B cell (primary cell): ENCODE measurements at regions of chr10 and their contacts with region 1.

Region 1: DNA sequence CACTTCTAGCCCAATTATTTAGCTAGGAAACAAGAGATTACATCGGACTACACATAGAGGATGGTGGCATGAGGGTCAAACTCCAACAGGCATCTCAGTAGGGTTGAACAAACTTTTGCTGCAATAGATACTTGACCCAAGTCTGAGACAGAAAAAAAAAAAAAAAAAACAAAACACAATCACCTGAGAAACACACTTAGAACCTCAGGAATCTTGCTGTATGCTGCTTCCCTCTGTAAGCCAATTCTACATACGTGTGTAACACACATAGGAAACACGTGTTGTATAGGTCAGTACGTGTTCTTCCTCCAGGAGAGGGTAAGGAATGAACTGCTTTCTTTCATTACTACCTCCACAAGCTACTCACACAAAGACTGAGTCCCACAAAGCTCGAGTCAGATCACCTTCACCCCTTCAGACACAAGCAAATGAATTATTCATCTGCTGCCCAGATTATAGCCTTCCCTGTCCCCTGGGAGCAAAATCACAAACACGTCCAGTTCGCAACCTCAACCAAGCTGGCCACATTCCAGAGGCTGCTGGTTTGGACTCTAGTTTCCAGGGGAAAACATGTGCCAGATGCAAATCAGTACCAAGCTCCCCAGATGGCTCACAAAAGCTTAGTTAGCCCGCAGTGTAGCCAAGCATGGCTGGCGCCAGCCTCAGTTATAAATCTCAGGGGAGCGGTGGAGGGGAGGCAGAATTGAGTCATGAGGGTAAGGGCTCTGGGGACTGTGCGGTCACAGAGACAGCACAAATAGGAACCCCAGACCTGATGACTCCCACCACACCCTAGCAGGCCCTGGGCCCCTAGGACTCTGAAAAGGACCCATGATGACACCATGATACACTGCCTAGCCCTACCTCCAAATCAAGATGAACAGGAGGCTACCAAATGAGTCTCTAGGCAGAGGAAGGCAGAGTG is 15.1 kb downstream of the PSAP start:
- DNase-seq: peak; percentile 95
- ATAC-seq: peak; percentile 92
- H3K4me3 ChIP-seq: peak overlapping the region; percentile 7 to 49 (median 30)
- H3K4me3 Mint-ChIP-seq: peak overlapping the region; percentile 88
- H3K27ac ChIP-seq: peak overlapping the region; percentile 91 to 94
- H3K27ac Mint-ChIP-seq: peak overlapping the region; percentile 97
- H3K4me1 ChIP-seq: peaks cover 74 to 91% of the 10 kb centered on the region in 2 donors
- H3K4me1 Mint-ChIP-seq: peaks cover 79% of the 10 kb centered on the region
- H3K27me3 ChIP-seq: no peaks in the 10 kb centered on the region
- H3K27me3 Mint-ChIP-seq: no peaks in the 10 kb centered on the region
- CTCF ChIP-seq: no peak

Region 2: GRCh38 chr10:71771821-71772617 is 63.9 kb before region 1 on chr10:
- CTCF ChIA-PET with region 1: interaction called, 5 read pairs
- POLR2A ChIA-PET with region 1: interaction called, 8 read pairs
- intact Hi-C with region 1: loop called (anchors 1 kb)
- DNase-seq: peak; percentile 27
- ATAC-seq: no peak
- H3K4me3 ChIP-seq: peak overlapping the region; percentile 82 to 97 (median 90)
- H3K4me3 Mint-ChIP-seq: peak overlapping the region; percentile 94
- H3K27ac ChIP-seq: peak overlapping the region; percentile 88 to 95
- H3K27ac Mint-ChIP-seq: peak overlapping the region; percentile 92
- H3K4me1 ChIP-seq: peaks cover 90 to 98% of the 10 kb centered on the region in 2 donors
- H3K4me1 Mint-ChIP-seq: peaks cover 93% of the 10 kb centered on the region
- H3K27me3 ChIP-seq: no peaks in the 10 kb centered on the region
- H3K27me3 Mint-ChIP-seq: no peaks in the 10 kb centered on the region
- CTCF ChIP-seq: no peak

Region 3: GRCh38 chr10:71790749-71791552 is 45.0 kb before region 1 on chr10:
- CTCF ChIA-PET with region 1: no interaction called
- POLR2A ChIA-PET with region 1: no interaction called
- intact Hi-C with region 1: no loop called
- DNase-seq: no peak
- ATAC-seq: peak; percentile 74
- H3K4me3 ChIP-seq: no peak overlapping the region
- H3K4me3 Mint-ChIP-seq: peak overlapping the region; percentile 67
- H3K27ac ChIP-seq: no peak overlapping the region
- H3K27ac Mint-ChIP-seq: peak overlapping the region; percentile 41
- H3K4me1 ChIP-seq: peaks cover 16 to 19% of the 10 kb centered on the region in 2 donors
- H3K4me1 Mint-ChIP-seq: peaks cover 16% of the 10 kb centered on the region
- H3K27me3 ChIP-seq: peaks cover 0 to 5% (median 2%) of the 10 kb centered on the region in 4 experiments
- H3K27me3 Mint-ChIP-seq: peaks cover 6% of the 10 kb centered on the region
- CTCF ChIP-seq: no peak

Region 4: DNA sequence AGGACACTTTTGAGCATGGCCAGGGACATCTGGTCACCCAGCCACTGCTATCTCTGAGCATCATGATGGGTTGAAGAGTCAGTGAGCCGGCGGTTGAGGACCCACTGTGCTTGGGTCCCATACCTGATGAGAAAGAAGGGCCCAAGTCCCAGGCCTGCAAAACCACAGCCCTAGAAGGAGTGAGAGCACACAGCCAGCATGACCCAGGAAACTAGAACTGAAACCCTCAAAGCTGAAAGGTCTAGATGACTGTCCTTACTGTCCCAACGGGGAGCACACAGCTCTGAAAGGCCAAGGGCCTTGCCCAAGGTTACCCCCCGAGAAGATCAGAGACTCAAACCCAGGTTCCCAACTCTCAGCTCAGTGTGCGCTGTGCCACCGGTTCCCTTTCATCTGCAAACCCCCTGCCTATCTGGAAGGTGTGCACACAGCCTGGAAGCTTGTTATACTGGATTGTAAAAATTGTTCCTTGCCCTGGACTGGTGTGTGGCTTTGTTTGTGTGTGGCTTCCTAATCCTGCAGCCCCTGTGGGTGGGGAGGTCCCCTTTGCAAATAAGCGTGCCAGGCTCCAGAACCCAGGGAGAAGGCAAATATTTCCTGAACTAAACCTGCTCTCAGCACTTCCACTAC is 37.8 kb after region 1 on chr10:
- CTCF ChIA-PET with region 1: interaction called, 7 read pairs
- POLR2A ChIA-PET with region 1: interaction called, 8 read pairs
- intact Hi-C with region 1: loop called (anchors 1 kb)
- DNase-seq: peak; percentile 41
- ATAC-seq: peak; percentile 58
- H3K4me3 ChIP-seq: no peak overlapping the region
- H3K4me3 Mint-ChIP-seq: peak overlapping the region; percentile 11
- H3K27ac ChIP-seq: peak overlapping the region; percentile 26 to 63
- H3K27ac Mint-ChIP-seq: peak overlapping the region; percentile 70
- H3K4me1 ChIP-seq: peaks cover 24 to 47% of the 10 kb centered on the region in 2 donors
- H3K4me1 Mint-ChIP-seq: peaks cover 40% of the 10 kb centered on the region
- H3K27me3 ChIP-seq: no peaks in the 10 kb centered on the region
- H3K27me3 Mint-ChIP-seq: no peaks in the 10 kb centered on the region
- CTCF ChIP-seq: no peak

Region 5: DNA sequence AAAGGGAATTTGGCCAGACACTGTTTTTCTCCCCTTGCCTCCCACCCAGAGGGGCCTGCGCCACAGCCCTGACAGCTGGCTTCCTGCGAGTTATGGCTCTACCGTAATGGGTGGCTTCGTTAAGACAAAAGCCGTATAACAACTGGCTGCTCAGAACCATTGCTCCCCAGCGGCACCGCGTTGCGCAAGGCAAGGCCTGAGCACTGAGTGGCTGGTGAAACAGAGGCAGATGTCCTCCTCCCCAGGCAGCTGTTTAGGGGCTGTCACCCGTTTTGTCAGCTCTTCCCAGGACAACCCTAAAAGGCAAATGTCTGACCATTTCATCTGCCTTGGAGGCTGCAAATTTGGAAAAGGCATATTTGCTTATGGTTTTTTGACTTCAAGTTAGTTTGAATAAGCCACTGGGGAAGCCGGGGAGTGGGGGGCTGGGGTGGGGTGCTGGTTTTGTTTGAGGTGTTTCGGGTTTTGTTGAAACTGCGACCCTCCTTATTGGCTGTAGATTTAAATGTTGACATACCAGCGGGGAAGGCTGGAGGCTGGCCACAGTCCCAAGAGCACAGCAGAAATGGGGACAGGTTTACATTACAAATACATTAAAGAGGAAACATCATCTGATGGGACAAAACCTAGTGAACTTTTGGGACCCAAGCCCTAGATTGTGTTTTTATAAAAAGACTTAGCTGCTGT is 253.1 kb after region 1 on chr10:
- CTCF ChIA-PET with region 1: no interaction called
- POLR2A ChIA-PET with region 1: no interaction called
- intact Hi-C with region 1: loop called (anchors 5 kb)
- DNase-seq: no peak
- ATAC-seq: no peak
- H3K4me3 ChIP-seq: peak overlapping the region in 4 of 5 experiments; percentile 79 to 93 (median 88)
- H3K4me3 Mint-ChIP-seq: peak overlapping the region; percentile 100
- H3K27ac ChIP-seq: peak overlapping the region; percentile 89 to 92
- H3K27ac Mint-ChIP-seq: peak overlapping the region; percentile 100
- H3K4me1 ChIP-seq: peaks cover 24 to 33% of the 10 kb centered on the region in 2 donors
- H3K4me1 Mint-ChIP-seq: peaks cover 47% of the 10 kb centered on the region
- H3K27me3 ChIP-seq: no peaks in the 10 kb centered on the region
- H3K27me3 Mint-ChIP-seq: no peaks in the 10 kb centered on the region
- CTCF ChIP-seq: no peak

Region 6: GRCh38 chr10:72260588-72261322 is 424.8 kb after region 1 on chr10:
- CTCF ChIA-PET with region 1: no interaction called
- POLR2A ChIA-PET with region 1: interaction called, 13 read pairs
- intact Hi-C with region 1: no loop called
- DNase-seq: peak; percentile 81
- ATAC-seq: peak; percentile 81
- H3K4me3 ChIP-seq: peak overlapping the region; percentile 51 to 80 (median 73)
- H3K4me3 Mint-ChIP-seq: peak overlapping the region; percentile 94
- H3K27ac ChIP-seq: peak overlapping the region; percentile 47 to 67
- H3K27ac Mint-ChIP-seq: peak overlapping the region; percentile 89
- H3K4me1 ChIP-seq: peaks cover 48 to 68% of the 10 kb centered on the region in 2 donors
- H3K4me1 Mint-ChIP-seq: peaks cover 51% of the 10 kb centered on the region
- H3K27me3 ChIP-seq: no peaks in the 10 kb centered on the region
- H3K27me3 Mint-ChIP-seq: no peaks in the 10 kb centered on the region
- CTCF ChIP-seq: no peak